Right lobe of liver (tissue), 6 donors: ENCODE measurements at regions of chr11 and their contacts with region 1.

Region 1: GRCh38 chr11:75280227-75280701 is 39.7 kb downstream of the TPBGL start:
- DNase-seq: peak; percentile 69 to 77 (median 76)
- ATAC-seq: peak; percentile 81 to 91 (median 90)
- H3K4me3 ChIP-seq: no peak overlapping the region
- H3K27ac ChIP-seq: no peak overlapping the region
- H3K4me1 ChIP-seq: no peaks in the 10 kb centered on the region
- H3K27me3 ChIP-seq: no peaks in the 10 kb centered on the region
- CTCF ChIP-seq: peak; percentile 96 to 98 (median 98)
- POLR2A ChIP-seq: no peak

Region 2: GRCh38 chr11:75323609-75324008 is 43.3 kb after region 1 on chr11:
- intact Hi-C with region 1: loop called in 1 of 2 experiments (anchors 5 kb)
- DNase-seq: no peak
- ATAC-seq: peak; percentile 24 to 66 (median 48)
- H3K4me3 ChIP-seq: no peak overlapping the region
- H3K27ac ChIP-seq: no peak overlapping the region
- H3K4me1 ChIP-seq: peaks cover 0 to 14% (median 7%) of the 10 kb centered on the region in 4 donors
- H3K27me3 ChIP-seq: no peaks in the 10 kb centered on the region
- CTCF ChIP-seq: no peak
- POLR2A ChIP-seq: no peak

Region 3: DNA sequence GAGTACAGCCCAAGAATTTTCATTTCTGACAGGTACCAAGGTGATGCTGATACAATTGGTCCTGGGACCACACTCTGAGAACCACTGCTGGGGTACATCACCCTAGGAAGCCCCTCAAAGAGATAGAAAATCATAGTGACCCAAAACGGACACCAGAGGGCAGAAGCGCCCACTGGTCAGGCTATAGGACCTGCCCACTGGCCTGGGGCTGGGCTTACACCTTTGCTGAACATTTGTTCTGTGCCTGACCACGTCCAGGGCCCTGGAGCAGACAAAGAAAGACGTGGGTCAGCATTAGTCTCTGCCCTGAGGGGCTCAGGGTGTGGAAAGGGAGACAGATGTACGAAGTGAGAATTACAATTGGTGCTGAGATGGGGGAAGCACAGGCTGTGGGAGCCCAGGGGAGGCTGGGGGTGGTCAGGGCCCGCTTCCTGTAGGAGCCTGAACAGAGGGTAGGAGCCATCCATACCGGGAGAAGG is 267.4 kb after region 1 on chr11:
- intact Hi-C with region 1: loop called in 1 of 2 experiments (anchors 10 kb)
- DNase-seq: peak in 2 of 3 donors; percentile 69 to 74
- ATAC-seq: peak; percentile 88 to 95 (median 91)
- H3K4me3 ChIP-seq: no peak overlapping the region
- H3K27ac ChIP-seq: no peak overlapping the region
- H3K4me1 ChIP-seq: no peaks in the 10 kb centered on the region
- H3K27me3 ChIP-seq: no peaks in the 10 kb centered on the region
- CTCF ChIP-seq: peak; percentile 79 to 89 (median 86)
- POLR2A ChIP-seq: no peak